ENCODE measurements at regions of chr9 and their contacts with region 1.

Region 1: DNA sequence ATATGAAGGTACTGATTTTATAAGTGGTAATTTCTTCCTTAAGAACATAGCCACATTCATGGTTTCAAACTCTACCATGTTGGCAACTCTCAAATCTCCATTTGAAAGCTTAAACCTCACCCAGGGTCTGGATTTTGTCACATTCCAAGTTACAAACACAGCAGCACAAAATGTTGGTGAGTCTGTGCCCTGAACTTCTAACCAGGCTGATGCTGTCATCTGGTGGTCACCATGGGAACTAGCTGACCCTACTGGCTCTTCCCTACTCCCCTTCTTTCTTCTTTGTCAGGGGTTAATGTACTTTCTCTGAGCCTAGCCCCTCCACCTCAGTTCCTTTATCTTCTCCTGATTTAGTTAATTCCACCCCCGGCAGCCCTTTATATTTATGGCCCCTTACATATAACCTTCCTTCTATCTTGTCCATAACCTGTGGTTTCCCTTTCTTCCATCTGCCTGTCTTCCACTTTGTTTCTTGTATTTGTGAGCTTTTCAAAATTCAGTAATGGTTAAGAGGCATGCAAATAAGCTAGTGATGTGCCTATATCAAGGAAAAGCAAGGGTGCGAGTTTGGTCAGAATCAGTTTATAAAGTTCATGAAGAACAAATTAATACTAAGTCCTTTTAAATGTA is 35.9 kb downstream of the TGFBR1 start:
- DNase-seq: peak; percentile 50 to 56 (median 53)
- H3K4me3 ChIP-seq: no peak overlapping the region
- H3K4me3 Mint-ChIP-seq: peak overlapping the region in 1 of 8 donors; percentile 21
- H3K27ac ChIP-seq: no peak overlapping the region
- H3K27ac Mint-ChIP-seq: peak overlapping the region; percentile 16 to 58 (median 43)
- H3K4me1 ChIP-seq: peaks cover 16% of the 10 kb centered on the region
- H3K4me1 Mint-ChIP-seq: peaks cover 21 to 31% (median 24%) of the 10 kb centered on the region in 4 donors
- H3K27me3 ChIP-seq: no peaks in the 10 kb centered on the region
- H3K27me3 Mint-ChIP-seq: no peaks in the 10 kb centered on the region

Region 2: GRCh38 chr9:98951967-98952366 is 188.8 kb before region 1 on chr9:
- CTCF ChIA-PET with region 1: no interaction called
- POLR2A ChIA-PET with region 1: no interaction called
- intact Hi-C with region 1: no loop called
- DNase-seq: no peak
- H3K4me3 ChIP-seq: no peak overlapping the region
- H3K4me3 Mint-ChIP-seq: no peak overlapping the region
- H3K27ac ChIP-seq: no peak overlapping the region
- H3K27ac Mint-ChIP-seq: no peak overlapping the region
- H3K4me1 ChIP-seq: no peaks in the 10 kb centered on the region
- H3K4me1 Mint-ChIP-seq: no peaks in the 10 kb centered on the region
- H3K27me3 ChIP-seq: no peaks in the 10 kb centered on the region
- H3K27me3 Mint-ChIP-seq: peaks cover 9 to 17% of the 10 kb centered on the region in 2 donors

Region 3: GRCh38 chr9:98974994-98975712 is 165.6 kb before region 1 on chr9:
- CTCF ChIA-PET with region 1: interaction called, 108 read pairs
- POLR2A ChIA-PET with region 1: no interaction called
- intact Hi-C with region 1: loop called (anchors 1 kb)
- DNase-seq: peak; percentile 61 to 74 (median 71)
- H3K4me3 ChIP-seq: peak overlapping the region in 1 of 2 donors; percentile 49
- H3K4me3 Mint-ChIP-seq: peak overlapping the region in 7 of 8 donors; percentile 30 to 62 (median 53)
- H3K27ac ChIP-seq: no peak overlapping the region
- H3K27ac Mint-ChIP-seq: no peak overlapping the region
- H3K4me1 ChIP-seq: peaks cover 10% of the 10 kb centered on the region
- H3K4me1 Mint-ChIP-seq: no peaks in the 10 kb centered on the region
- H3K27me3 ChIP-seq: no peaks in the 10 kb centered on the region
- H3K27me3 Mint-ChIP-seq: peaks cover 5% of the 10 kb centered on the region in 2 donors

Region 4: GRCh38 chr9:99118782-99119466 is 21.9 kb before region 1 on chr9:
- CTCF ChIA-PET with region 1: interaction called, 28 read pairs
- POLR2A ChIA-PET with region 1: interaction called, 11 read pairs
- intact Hi-C with region 1: no loop called
- DNase-seq: peak; percentile 66 to 78 (median 70)
- H3K4me3 ChIP-seq: peak overlapping the region; percentile 5 to 7
- H3K4me3 Mint-ChIP-seq: peak overlapping the region; percentile 49 to 95 (median 78)
- H3K27ac ChIP-seq: no peak overlapping the region
- H3K27ac Mint-ChIP-seq: peak overlapping the region; percentile 33 to 95 (median 78)
- H3K4me1 ChIP-seq: peaks cover 90% of the 10 kb centered on the region
- H3K4me1 Mint-ChIP-seq: peaks cover 65 to 91% (median 75%) of the 10 kb centered on the region in 4 donors
- H3K27me3 ChIP-seq: no peaks in the 10 kb centered on the region
- H3K27me3 Mint-ChIP-seq: no peaks in the 10 kb centered on the region

Region 5: DNA sequence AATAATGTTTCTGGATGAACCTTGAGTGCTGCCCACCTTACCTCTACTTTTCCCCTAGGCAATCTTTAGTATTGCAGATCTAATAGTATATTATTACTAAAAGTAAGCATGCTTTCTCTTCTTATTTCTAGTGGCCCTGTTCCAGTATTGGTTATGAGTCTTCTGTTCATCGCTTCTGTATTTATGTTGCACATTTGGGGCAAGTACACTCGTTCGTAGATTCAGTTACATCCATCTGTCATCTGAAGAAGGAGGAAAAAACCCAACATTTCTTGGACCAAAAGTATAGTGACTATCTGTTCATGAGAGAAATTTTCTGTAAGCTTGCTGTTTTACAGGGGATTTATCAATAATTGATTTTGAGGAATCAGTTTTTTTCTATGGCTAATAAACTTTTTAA is 89.4 kb after region 1 on chr9:
- CTCF ChIA-PET with region 1: no interaction called
- POLR2A ChIA-PET with region 1: no interaction called
- intact Hi-C with region 1: no loop called
- DNase-seq: no peak
- H3K4me3 ChIP-seq: no peak overlapping the region
- H3K4me3 Mint-ChIP-seq: no peak overlapping the region
- H3K27ac ChIP-seq: no peak overlapping the region
- H3K27ac Mint-ChIP-seq: no peak overlapping the region
- H3K4me1 ChIP-seq: peaks cover 7% of the 10 kb centered on the region
- H3K4me1 Mint-ChIP-seq: peaks cover 6 to 28% (median 20%) of the 10 kb centered on the region in 4 donors
- H3K27me3 ChIP-seq: no peaks in the 10 kb centered on the region
- H3K27me3 Mint-ChIP-seq: no peaks in the 10 kb centered on the region